Sigmoid colon (tissue), 7 donors: ENCODE measurements at regions of chr1 and their contacts with region 1.

Region 1: DNA sequence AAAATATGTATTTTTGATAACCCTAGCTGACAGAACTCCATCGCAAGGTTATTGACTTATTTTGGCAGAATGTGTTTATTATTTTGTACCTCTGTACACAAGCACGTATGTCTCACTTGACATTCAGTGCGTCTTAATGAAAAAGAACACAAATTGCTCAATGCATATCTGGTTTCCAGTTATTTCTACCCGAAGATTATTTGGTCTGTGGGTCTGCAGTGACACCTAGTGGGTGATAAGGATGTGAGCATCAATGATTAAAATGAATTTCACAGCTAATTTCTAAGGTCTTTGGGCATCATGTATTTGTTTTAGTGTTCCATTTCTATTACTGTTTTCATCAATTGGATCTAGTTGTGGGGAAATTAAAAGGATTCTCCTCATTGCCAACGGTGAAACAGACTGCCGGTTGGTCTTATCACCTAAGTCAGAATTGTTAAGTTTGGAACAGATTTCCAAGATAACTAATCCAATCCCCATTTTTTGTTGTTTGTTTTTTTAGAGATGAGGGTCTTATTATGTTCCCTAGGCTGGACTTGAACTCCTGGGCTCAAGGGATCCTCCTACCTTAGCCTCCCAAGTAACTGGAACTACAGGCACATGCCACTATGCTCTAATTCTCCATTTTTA is 13.9 kb downstream of the DDX20 start:
- DNase-seq: no peak
- H3K4me3 ChIP-seq: no peak overlapping the region
- H3K27ac ChIP-seq: no peak overlapping the region
- H3K4me1 ChIP-seq: peaks cover 0 to 6% (median 0%) of the 10 kb centered on the region in 4 donors
- H3K27me3 ChIP-seq: no peaks in the 10 kb centered on the region
- CTCF ChIP-seq: peak; percentile 79 to 83 (median 82)
- EP300 ChIP-seq: no peak
- POLR2A ChIP-seq: no peak

Region 2: GRCh38 chr1:111222308-111223125 is 547.1 kb before region 1 on chr1:
- intact Hi-C with region 1: loop called (anchors 2 kb)
- DNase-seq: peak; percentile 83
- H3K4me3 ChIP-seq: no peak overlapping the region
- H3K27ac ChIP-seq: no peak overlapping the region
- H3K4me1 ChIP-seq: peaks cover 0 to 8% (median 0%) of the 10 kb centered on the region in 4 donors
- H3K27me3 ChIP-seq: no peaks in the 10 kb centered on the region
- CTCF ChIP-seq: peak; percentile 69 to 91 (median 78)
- EP300 ChIP-seq: no peak
- POLR2A ChIP-seq: no peak

Region 3: GRCh38 chr1:111481387-111482221 is 288.0 kb before region 1 on chr1:
- intact Hi-C with region 1: loop called (anchors 1 kb)
- DNase-seq: peak; percentile 91
- H3K4me3 ChIP-seq: no peak overlapping the region
- H3K27ac ChIP-seq: peak overlapping the region in 1 of 4 donors; percentile 33
- H3K4me1 ChIP-seq: peaks cover 0 to 19% (median 11%) of the 10 kb centered on the region in 4 donors
- H3K27me3 ChIP-seq: no peaks in the 10 kb centered on the region
- CTCF ChIP-seq: peak; percentile 61 to 83 (median 81)
- EP300 ChIP-seq: no peak
- POLR2A ChIP-seq: no peak

Region 4: DNA sequence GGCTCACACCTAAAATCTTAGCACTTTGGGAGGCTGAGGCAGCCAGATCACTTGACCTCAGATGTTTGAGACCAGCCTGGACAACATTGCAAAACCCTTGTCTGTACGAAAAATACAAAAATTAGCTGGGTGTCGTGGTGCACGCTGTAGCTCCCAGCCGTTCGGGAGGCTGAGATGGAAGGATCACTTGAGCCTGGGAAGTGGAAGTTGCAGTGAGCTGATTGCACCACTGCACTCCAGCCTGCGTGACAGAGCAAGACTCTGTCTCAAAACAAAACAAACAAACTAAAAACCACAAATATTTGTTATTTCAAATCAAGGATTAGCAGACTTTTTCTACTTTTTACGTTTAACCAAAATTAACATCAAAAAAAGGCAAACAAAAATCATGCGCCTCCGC is 61.7 kb before region 1 on chr1:
- intact Hi-C with region 1: no loop called
- DNase-seq: no peak
- H3K4me3 ChIP-seq: no peak overlapping the region
- H3K27ac ChIP-seq: peak overlapping the region in 2 of 4 donors; percentile 7 to 45
- H3K4me1 ChIP-seq: peaks cover 0 to 19% (median 14%) of the 10 kb centered on the region in 4 donors
- H3K27me3 ChIP-seq: no peaks in the 10 kb centered on the region
- CTCF ChIP-seq: no peak
- EP300 ChIP-seq: no peak
- POLR2A ChIP-seq: no peak